A673 (cell line): ENCODE measurements at regions of chr15 and their contacts with region 1.

Region 1: DNA sequence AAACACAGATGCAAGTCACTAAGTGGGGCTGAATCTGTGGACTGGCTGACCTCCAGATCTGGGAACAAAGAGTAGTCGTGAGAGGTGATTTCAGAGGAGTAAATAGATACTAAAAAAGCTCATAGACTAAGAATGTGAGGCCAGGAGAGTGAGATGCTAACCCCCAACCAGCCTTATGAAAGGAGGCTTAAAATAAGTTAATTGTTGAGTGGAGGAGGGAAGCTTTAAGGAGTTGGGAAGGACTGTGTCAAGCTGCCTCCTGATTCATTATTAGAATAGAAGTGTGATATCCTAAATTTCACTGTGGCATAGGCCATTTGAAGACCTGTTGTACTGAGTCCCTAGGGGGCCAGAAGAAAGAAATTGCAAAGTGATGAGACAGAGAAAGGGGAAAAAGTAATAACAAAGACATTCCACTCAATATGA is 107.6 kb downstream of the RBPMS2 start:
- DNase-seq: peak; percentile 11
- H3K4me3 ChIP-seq: no peak overlapping the region
- H3K27ac ChIP-seq: no peak overlapping the region
- H3K4me1 ChIP-seq: no peaks in the 10 kb centered on the region
- H3K27me3 ChIP-seq: no peaks in the 10 kb centered on the region
- CTCF ChIP-seq: no peak

Region 2: DNA sequence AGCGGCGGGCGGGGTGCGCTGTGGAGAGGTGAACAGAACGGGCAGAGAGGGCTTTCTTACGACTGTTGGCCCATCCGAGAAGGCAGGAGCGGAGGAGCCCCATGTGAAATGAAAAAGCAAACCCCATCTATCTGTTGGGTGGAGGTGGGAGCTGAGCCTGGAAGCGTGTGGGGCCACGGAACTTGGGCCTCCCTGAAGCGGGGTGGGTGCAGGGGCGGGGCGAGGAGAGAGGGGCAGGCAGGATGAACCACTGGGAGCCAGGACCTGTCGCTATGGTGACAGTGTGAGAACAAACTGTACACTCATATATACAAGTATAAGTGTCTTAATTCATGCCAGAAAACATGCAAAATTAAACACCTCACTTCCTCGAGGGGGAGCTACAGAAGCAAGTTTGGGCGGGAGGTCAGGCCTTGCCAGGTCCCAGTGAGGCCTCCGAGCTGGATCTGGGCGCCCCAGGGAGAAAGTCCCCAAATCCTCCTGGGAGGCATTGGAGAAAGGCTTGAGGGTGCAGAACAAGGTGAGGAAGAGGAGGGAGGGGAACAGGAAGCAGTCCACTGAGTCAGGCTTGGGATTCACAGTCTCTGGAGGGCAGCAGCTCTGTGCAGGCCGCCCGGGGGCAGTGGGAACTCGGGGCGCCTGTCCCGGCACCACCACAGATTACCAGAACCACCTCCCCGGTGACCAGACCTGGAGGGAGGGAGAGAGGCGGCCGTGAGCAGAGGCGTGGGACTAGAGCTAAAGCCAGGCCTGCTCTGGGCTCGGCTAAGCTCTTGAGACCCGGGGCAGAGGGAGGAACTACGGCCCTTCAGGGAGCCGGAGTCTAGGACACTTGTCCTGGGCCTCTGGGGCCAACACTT is 72.8 kb after region 1 on chr15:
- CTCF ChIA-PET with region 1: no interaction called
- POLR2A ChIA-PET with region 1: no interaction called
- intact Hi-C with region 1: no loop called
- DNase-seq: peak; percentile 56
- H3K4me3 ChIP-seq: no peak overlapping the region
- H3K27ac ChIP-seq: no peak overlapping the region
- H3K4me1 ChIP-seq: no peaks in the 10 kb centered on the region
- H3K27me3 ChIP-seq: no peaks in the 10 kb centered on the region
- CTCF ChIP-seq: peak; percentile 46

Region 3: DNA sequence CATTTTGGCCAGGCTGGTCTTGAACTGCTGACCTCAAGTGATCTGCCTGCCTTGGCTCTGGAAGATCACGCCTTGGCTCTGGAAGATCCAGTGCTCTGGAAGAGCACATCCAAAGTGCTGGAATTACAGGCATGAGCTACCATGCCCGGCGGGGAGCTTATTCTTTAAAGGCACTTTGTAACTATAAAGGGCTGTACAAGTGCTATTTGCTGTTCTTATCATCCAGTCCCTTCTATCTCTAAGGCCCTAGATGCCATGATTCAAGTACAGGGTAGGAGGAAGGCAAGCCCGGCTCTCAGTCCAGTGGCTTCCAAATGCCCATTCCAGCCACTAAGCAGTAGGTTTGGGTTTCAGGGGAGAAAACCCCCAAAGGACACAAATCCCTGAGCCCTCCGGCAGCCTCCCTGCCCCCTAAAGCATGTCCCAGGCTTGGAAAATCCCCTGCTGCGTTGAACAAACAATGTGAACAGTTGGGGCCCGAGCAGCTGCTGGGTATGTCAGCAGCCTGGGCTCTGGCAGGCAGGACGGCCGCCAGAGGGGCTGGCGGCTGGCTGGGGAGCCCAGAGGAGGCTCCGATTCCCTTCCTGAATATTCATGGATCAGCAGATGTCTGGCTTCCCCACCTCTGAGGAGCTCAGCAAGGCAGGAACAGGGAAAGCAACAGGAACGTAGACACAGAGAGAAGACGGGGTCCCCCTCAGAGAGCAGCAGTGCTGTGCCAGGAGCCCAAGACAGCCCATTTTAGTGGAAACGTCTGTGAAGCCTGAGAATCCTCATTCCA is 747.3 kb after region 1 on chr15:
- CTCF ChIA-PET with region 1: no interaction called
- POLR2A ChIA-PET with region 1: interaction called, 13 read pairs
- intact Hi-C with region 1: no loop called
- DNase-seq: peak; percentile 94
- H3K4me3 ChIP-seq: no peak overlapping the region
- H3K27ac ChIP-seq: peak overlapping the region; percentile 56
- H3K4me1 ChIP-seq: peaks cover 36% of the 10 kb centered on the region
- H3K27me3 ChIP-seq: no peaks in the 10 kb centered on the region
- CTCF ChIP-seq: 0 out of 2 replicates have a peak, but pooled peaks have one; percentile 21